Heart left ventricle (tissue), 16 donors: ENCODE measurements at regions of chr9 and their contacts with region 1.

Region 1: GRCh38 chr9:95018099-95018936 is 291.8 kb downstream of the AOPEP start:
- DNase-seq: peak; percentile 48 to 74 (median 65)
- ATAC-seq: peak; percentile 63 to 86 (median 76)
- H3K4me3 ChIP-seq: peak overlapping the region in 8 of 12 donors; percentile 1 to 25 (median 15)
- H3K27ac ChIP-seq: peak overlapping the region; percentile 14 to 99 (median 74)
- H3K4me1 ChIP-seq: peaks cover 11 to 100% (median 81%) of the 10 kb centered on the region in 12 donors
- H3K27me3 ChIP-seq: no peaks in the 10 kb centered on the region
- CTCF ChIP-seq: no peak
- POLR2A ChIP-seq: no peak

Region 2: DNA sequence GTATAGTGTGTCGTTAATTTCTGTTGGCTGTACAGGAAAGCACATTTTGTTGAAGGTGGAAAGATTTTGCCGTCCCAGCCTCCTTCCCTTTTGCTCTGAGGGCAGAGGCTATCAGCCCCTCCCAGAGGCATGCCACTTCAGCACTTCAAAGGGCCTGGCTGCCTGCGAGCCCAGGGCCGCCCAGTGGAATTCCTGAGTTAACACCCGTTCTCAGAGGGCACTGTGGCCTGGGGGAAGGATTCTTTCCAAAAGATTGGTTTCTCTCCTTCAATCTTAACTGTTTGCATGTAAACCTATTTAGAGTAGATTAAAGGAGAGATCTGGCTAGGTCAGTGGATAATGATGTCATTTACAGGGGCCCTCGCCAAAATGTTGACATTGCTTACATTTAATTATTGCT is 60.6 kb after region 1 on chr9:
- intact Hi-C with region 1: loop called in 1 of 10 experiments (anchors 5 kb)
- DNase-seq: no peak
- ATAC-seq: peak; percentile 44 to 56 (median 54)
- H3K4me3 ChIP-seq: no peak overlapping the region
- H3K27ac ChIP-seq: peak overlapping the region in 11 of 12 donors; percentile 51 to 81 (median 70)
- H3K4me1 ChIP-seq: peaks cover 31 to 100% (median 76%) of the 10 kb centered on the region in 12 donors
- H3K27me3 ChIP-seq: no peaks in the 10 kb centered on the region
- CTCF ChIP-seq: peak in 1 of 12 donors; percentile 11
- POLR2A ChIP-seq: no peak

Region 3: GRCh38 chr9:95092262-95093072 is 74.1 kb after region 1 on chr9:
- intact Hi-C with region 1: loop called in 1 of 10 experiments (anchors 5 kb)
- DNase-seq: peak in 1 of 5 donors; percentile 49
- ATAC-seq: peak in 2 of 4 donors; percentile 1 to 3
- H3K4me3 ChIP-seq: no peak overlapping the region
- H3K27ac ChIP-seq: peak overlapping the region; percentile 61 to 90 (median 82)
- H3K4me1 ChIP-seq: peaks cover 13 to 96% (median 78%) of the 10 kb centered on the region in 12 donors
- H3K27me3 ChIP-seq: no peaks in the 10 kb centered on the region
- CTCF ChIP-seq: no peak
- POLR2A ChIP-seq: no peak